Naive thymus-derived CD4-positive, alpha-beta T cell (primary cell): ENCODE measurements at regions of chr11 and their contacts with region 1.

Region 1: GRCh38 chr11:18588297-18589252 is at the start of gene UEVLD:
- DNase-seq: peak; percentile 18 to 82 (median 23)
- ATAC-seq: peak; percentile 62
- H3K4me3 ChIP-seq: peak within 1 kb of the TSS; percentile 63
- H3K4me3 Mint-ChIP-seq: no peak within 1 kb of the TSS
- H3K27ac ChIP-seq: peak within 1 kb of the TSS; percentile 68
- H3K27ac Mint-ChIP-seq: no peak within 1 kb of the TSS
- H3K4me1 ChIP-seq: peaks cover 8 to 15% of the 10 kb centered on the region in 2 donors
- H3K4me1 Mint-ChIP-seq: peaks cover 0 to 19% (median 0%) of the 10 kb centered on the region in 7 donors
- H3K27me3 ChIP-seq: no peaks in the 10 kb centered on the region
- H3K27me3 Mint-ChIP-seq: no peaks in the 10 kb centered on the region
- total RNA-seq, gene UEVLD: 3.6 to 19.8 (median 5.8) TPM

Region 2: DNA sequence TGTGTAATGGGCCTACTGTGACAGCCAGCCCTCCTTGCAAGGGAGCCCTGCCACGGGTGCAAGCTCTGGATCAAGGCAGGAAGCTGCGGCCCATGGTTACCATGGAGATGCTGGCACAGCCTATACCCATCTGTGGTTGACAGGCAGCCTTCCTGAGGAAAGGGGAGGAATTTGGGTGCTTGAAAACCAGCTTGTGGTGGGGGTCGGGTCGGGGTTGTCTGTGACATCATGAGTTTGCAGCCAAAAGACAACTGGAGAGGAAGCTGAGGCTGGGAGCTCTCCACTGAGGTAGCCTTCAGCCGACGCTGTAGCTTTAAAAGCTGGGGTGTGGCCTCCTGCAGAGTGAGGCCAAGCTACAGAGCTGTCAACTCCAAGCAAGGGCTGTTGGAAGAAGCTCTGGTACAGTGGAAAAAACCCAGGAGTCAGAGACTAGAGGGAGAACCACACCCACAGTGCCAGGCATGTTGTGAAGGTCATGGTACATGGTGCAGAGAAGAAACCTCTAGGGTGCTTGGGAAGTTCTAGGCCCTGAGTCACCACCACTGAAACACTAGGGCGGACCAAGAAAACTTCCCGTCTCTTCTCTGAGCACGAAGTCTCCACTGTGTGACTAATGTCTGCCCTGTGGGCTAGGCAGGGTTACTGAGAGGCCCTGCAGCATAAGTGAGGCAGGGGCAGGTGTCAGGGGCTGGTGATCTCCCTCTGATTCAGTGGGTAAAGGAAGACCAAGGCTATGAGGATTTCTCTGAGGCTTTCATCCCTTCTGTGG is 205.0 kb before region 1 on chr11:
- CTCF ChIA-PET with region 1: no interaction called
- POLR2A ChIA-PET with region 1: no interaction called
- intact Hi-C with region 1: loop called in 1 of 2 experiments (anchors 5 kb)
- DNase-seq: peak; percentile 15 to 74 (median 70)
- ATAC-seq: peak; percentile 87
- H3K4me3 ChIP-seq: peak overlapping the region; percentile 49
- H3K4me3 Mint-ChIP-seq: peak overlapping the region; percentile 70 to 83 (median 80)
- H3K27ac ChIP-seq: peak overlapping the region; percentile 85
- H3K27ac Mint-ChIP-seq: peak overlapping the region; percentile 92 to 100 (median 98)
- H3K4me1 ChIP-seq: peaks cover 20 to 21% of the 10 kb centered on the region in 2 donors
- H3K4me1 Mint-ChIP-seq: peaks cover 29 to 53% (median 45%) of the 10 kb centered on the region in 7 donors
- H3K27me3 ChIP-seq: no peaks in the 10 kb centered on the region
- H3K27me3 Mint-ChIP-seq: no peaks in the 10 kb centered on the region

Region 3: DNA sequence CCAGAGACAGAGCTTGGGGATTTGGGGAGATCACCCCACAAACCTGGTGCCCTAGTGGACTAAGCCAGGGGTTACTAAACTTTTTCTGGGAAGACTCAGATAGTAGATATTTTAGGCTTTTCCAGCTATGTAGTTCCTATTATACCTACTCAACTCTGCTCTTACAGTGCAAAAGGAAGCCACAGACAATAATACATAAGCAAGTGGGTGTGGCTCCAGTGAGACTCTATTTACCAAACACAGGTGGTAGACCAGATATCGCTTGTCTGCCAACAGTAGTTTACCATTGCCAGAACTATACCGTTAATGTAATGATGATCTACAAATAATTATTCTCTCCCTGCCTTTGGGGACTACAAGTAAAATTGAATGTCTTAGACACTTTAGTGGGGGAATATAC is 169.5 kb before region 1 on chr11:
- CTCF ChIA-PET with region 1: no interaction called
- POLR2A ChIA-PET with region 1: no interaction called
- intact Hi-C with region 1: no loop called
- DNase-seq: no peak
- ATAC-seq: no peak
- H3K4me3 ChIP-seq: no peak overlapping the region
- H3K4me3 Mint-ChIP-seq: no peak overlapping the region
- H3K27ac ChIP-seq: no peak overlapping the region
- H3K27ac Mint-ChIP-seq: no peak overlapping the region
- H3K4me1 ChIP-seq: no peaks in the 10 kb centered on the region
- H3K4me1 Mint-ChIP-seq: peaks cover 2 to 12% (median 11%) of the 10 kb centered on the region in 7 donors
- H3K27me3 ChIP-seq: no peaks in the 10 kb centered on the region
- H3K27me3 Mint-ChIP-seq: peaks cover 0 to 2% (median 0%) of the 10 kb centered on the region in 5 donors

Region 4: DNA sequence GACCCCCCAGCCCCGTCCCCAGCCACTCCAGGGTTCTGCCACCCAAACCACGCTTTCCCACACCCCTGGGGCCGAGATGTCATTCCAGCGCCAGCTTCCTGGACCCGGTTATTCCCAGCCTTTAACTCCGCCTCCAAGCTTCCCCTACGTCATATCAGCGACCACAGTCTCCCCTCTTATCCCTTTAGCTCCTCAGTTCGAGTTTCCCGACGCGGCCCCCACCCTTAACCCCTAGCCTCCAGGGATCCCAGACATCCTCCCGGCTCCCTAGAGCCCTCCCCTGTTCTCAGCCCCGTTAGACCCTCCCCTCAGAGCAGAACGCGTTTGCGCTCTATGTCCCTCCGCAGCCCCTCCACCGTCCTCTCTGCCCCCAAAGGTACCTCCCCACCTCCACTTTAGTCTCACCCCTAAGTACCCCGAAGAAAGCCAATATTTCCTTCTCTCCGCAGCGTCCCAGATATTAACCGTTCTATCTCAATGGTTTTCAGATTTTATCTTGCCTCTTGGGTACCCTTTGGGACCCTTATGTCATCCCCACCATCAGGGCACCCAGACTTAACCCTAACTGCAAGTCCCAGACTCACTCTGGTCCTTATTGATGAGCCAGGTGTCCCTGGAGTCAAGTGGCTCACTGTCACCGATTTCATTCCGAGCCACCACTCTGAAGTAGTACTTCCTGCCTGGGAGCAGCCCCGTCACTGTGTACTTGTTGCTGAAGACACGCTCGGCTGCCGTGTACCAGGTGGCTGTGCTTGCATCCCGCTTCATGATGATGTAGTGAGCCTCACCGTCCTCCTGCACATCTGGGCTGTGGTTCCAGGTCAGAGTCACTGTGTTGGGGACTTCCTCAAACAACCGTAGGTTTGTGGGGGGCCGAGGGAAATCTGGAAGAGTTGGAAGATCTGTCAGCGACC is 118.0 kb after region 1 on chr11:
- CTCF ChIA-PET with region 1: no interaction called
- POLR2A ChIA-PET with region 1: no interaction called
- intact Hi-C with region 1: loop called in 1 of 2 experiments (anchors 1 kb)
- DNase-seq: peak in 8 of 9 donors; percentile 34 to 73 (median 64)
- ATAC-seq: peak; percentile 83
- H3K4me3 ChIP-seq: peak overlapping the region; percentile 88
- H3K4me3 Mint-ChIP-seq: peak overlapping the region; percentile 90 to 98 (median 93)
- H3K27ac ChIP-seq: peak overlapping the region; percentile 68
- H3K27ac Mint-ChIP-seq: peak overlapping the region; percentile 81 to 98 (median 90)
- H3K4me1 ChIP-seq: peaks cover 9 to 10% of the 10 kb centered on the region in 2 donors
- H3K4me1 Mint-ChIP-seq: peaks cover 15 to 29% (median 25%) of the 10 kb centered on the region in 7 donors
- H3K27me3 ChIP-seq: no peaks in the 10 kb centered on the region
- H3K27me3 Mint-ChIP-seq: peaks cover 0 to 55% (median 0%) of the 10 kb centered on the region in 5 donors